Naive thymus-derived CD4-positive, alpha-beta T cell (primary cell): ENCODE measurements at regions of chr14 and their contacts with region 1.

Region 1: DNA sequence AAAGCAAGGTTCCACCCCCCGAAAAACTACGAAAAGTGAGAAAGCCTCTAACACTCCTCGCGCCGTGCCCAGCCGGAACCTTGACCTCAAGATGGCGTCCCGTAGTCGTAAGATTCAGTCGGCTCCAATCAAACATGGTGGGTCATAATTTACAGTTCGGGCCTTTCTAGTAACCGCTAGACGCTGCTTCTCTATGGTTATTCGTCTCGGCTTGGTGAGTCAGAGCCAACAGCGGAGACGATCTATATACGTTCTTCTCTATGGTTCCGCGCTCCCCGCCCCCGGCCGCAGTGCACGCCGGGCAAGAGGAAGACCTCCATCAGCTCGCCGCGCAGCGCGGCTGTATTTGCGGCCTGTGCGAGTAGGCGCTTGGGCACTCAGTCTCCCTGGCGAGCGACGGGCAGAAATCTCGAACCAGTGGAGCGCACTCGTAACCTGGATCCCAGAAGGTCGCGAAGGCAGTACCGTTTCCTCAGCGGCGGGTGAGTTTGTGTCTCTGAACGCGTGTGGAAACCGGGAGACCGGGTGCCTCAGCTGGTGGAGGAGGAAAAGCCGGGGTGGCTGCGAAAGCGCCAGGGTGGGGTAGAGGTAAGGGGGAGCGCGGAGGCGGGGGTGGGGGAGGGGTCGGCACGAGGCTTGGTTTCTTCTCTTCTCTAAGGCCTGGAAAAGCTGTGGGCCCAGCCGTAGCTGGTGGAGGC is at the start of gene RBM25:
- DNase-seq: peak; percentile 85 to 98 (median 96)
- ATAC-seq: peak; percentile 99
- H3K4me3 ChIP-seq: peak within 1 kb of the TSS; percentile 77
- H3K4me3 Mint-ChIP-seq: no peak within 1 kb of the TSS
- H3K27ac ChIP-seq: peak within 1 kb of the TSS; percentile 92
- H3K27ac Mint-ChIP-seq: no peak within 1 kb of the TSS
- H3K4me1 ChIP-seq: peaks cover 30 to 36% of the 10 kb centered on the region in 2 donors
- H3K4me1 Mint-ChIP-seq: peaks cover 19 to 45% (median 30%) of the 10 kb centered on the region in 7 donors
- H3K27me3 ChIP-seq: no peaks in the 10 kb centered on the region
- H3K27me3 Mint-ChIP-seq: no peaks in the 10 kb centered on the region
- total RNA-seq, gene RBM25: 111 to 168 (median 146) TPM

Region 2: DNA sequence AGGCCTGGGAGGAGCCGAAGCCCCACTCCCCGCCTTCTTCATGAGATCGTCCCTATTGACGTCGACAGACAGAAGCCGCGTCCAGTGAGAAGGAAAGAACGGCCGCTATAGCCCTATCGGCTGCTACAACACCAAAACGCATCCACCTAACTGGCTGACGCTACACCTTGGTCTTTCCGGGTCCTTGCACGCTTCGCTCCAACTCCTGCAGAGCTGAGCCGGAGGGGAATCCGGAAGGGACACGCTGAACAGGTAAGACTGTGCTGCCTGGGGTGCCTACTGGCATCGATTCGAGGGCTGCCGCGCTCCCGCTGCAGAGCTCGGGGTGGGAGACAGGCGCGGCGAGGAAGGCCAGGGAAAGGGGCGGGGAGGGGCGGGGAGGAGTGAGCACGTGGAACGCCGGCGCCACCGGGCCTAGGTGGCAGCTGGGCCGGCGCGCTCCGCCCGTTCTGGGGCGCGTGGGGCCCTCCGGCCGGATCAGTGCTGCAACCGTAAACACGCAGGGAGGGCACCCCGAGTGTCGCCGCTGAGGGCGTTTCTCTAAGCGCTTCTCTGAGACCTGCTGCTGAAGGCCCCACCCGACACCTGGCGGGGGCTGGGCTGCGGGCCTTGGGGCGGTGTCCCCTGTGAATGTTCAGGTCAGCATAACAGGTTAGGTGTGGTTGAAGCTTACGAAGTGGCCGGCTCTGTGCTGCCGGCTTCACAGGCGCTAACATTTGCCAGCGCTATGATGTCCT is 131.9 kb before region 1 on chr14 and contains the start of gene DCAF4:
- CTCF ChIA-PET with region 1: no interaction called
- POLR2A ChIA-PET with region 1: interaction called, 3 read pairs
- intact Hi-C with region 1: loop called in 1 of 2 experiments (anchors 1 kb)
- DNase-seq: peak; percentile 67 to 96 (median 92)
- ATAC-seq: peak; percentile 96
- H3K4me3 ChIP-seq: peak within 1 kb of the TSS; percentile 64
- H3K4me3 Mint-ChIP-seq: peak within 1 kb of the TSS; percentile 93 to 99 (median 96)
- H3K27ac ChIP-seq: peak within 1 kb of the TSS; percentile 74
- H3K27ac Mint-ChIP-seq: peak within 1 kb of the TSS; percentile 58 to 96 (median 95)
- H3K4me1 ChIP-seq: peaks cover 0 to 3% of the 10 kb centered on the region in 2 donors
- H3K4me1 Mint-ChIP-seq: peaks cover 2 to 27% (median 11%) of the 10 kb centered on the region in 7 donors
- H3K27me3 ChIP-seq: no peaks in the 10 kb centered on the region
- H3K27me3 Mint-ChIP-seq: peaks cover 0 to 21% (median 0%) of the 10 kb centered on the region in 5 donors
- total RNA-seq, gene DCAF4: 17.6 to 37.8 (median 21.8) TPM

Region 3: DNA sequence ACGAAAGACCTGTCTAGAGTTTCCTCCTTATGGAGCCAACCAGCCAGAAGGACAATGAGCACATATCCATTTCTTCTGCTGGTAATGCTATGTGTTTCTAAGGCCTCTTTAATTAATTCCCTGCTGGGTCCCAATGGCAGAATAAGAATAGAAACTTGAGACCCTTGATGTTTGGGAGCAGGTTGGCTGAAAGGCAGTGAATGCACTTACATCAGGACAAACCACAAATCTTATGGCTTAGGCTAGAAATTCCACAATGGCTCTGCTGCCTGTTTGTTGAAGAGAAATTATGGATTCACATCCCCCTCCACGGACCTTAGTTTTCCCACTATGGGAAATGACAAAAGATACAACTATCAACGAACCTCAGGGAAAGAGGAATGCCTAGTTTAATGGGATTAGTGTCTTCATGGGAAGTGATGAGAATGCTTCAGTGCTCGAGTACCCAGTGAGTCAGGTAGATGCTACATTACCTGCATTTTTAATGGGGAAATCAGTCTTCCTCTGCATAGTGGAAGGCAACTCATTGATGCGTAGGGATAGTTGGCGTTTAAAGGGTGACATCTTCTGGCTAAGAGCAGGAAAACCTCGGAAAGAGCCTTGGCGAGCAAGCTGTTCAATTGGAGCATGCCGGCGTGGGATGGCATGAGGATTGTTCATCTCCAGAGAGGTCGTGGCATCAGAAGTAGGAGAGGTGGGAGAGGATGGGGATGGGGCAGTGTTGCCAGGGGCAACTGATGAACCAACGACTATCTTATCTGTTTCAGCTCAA is 225.4 kb after region 1 on chr14:
- CTCF ChIA-PET with region 1: no interaction called
- POLR2A ChIA-PET with region 1: no interaction called
- intact Hi-C with region 1: no loop called
- DNase-seq: no peak
- ATAC-seq: no peak
- H3K4me3 ChIP-seq: no peak overlapping the region
- H3K4me3 Mint-ChIP-seq: no peak overlapping the region
- H3K27ac ChIP-seq: no peak overlapping the region
- H3K27ac Mint-ChIP-seq: peak overlapping the region in 1 of 9 donors; percentile 46
- H3K4me1 ChIP-seq: no peaks in the 10 kb centered on the region
- H3K4me1 Mint-ChIP-seq: peaks cover 0 to 8% (median 0%) of the 10 kb centered on the region in 7 donors
- H3K27me3 ChIP-seq: no peaks in the 10 kb centered on the region
- H3K27me3 Mint-ChIP-seq: no peaks in the 10 kb centered on the region

Region 4: GRCh38 chr14:73458151-73458976 is 400.0 kb after region 1 on chr14 and contains the start of gene NUMB:
- CTCF ChIA-PET with region 1: no interaction called
- POLR2A ChIA-PET with region 1: interaction called, 7 read pairs
- intact Hi-C with region 1: loop called (anchors 1 kb)
- DNase-seq: peak; percentile 70 to 99 (median 98)
- ATAC-seq: peak; percentile 99
- H3K4me3 ChIP-seq: peak within 1 kb of the TSS; percentile 71
- H3K4me3 Mint-ChIP-seq: peak within 1 kb of the TSS; percentile 87 to 100 (median 98)
- H3K27ac ChIP-seq: peak within 1 kb of the TSS; percentile 82
- H3K27ac Mint-ChIP-seq: peak within 1 kb of the TSS; percentile 80 to 98 (median 94)
- H3K4me1 ChIP-seq: peaks cover 0 to 9% of the 10 kb centered on the region in 2 donors
- H3K4me1 Mint-ChIP-seq: peaks cover 32 to 48% (median 45%) of the 10 kb centered on the region in 7 donors
- H3K27me3 ChIP-seq: no peaks in the 10 kb centered on the region
- H3K27me3 Mint-ChIP-seq: no peaks in the 10 kb centered on the region
- total RNA-seq, gene NUMB: 48.9 to 90.6 (median 49.4) TPM

Region 5: GRCh38 chr14:73713803-73714655 is 655.7 kb after region 1 on chr14 and contains the start of gene PNMA1:
- CTCF ChIA-PET with region 1: no interaction called
- POLR2A ChIA-PET with region 1: no interaction called
- intact Hi-C with region 1: loop called in 1 of 2 experiments (anchors 10 kb)
- DNase-seq: peak; percentile 76 to 90 (median 83)
- ATAC-seq: peak; percentile 91
- H3K4me3 ChIP-seq: peak within 1 kb of the TSS; percentile 92
- H3K4me3 Mint-ChIP-seq: peak within 1 kb of the TSS; percentile 91 to 100 (median 97)
- H3K27ac ChIP-seq: peak within 1 kb of the TSS; percentile 83
- H3K27ac Mint-ChIP-seq: peak within 1 kb of the TSS; percentile 93 to 99 (median 96)
- H3K4me1 ChIP-seq: peaks cover 3 to 4% of the 10 kb centered on the region in 2 donors
- H3K4me1 Mint-ChIP-seq: peaks cover 22 to 40% (median 26%) of the 10 kb centered on the region in 7 donors
- H3K27me3 ChIP-seq: no peaks in the 10 kb centered on the region
- H3K27me3 Mint-ChIP-seq: no peaks in the 10 kb centered on the region
- total RNA-seq, gene PNMA1: 21.6 to 40.4 (median 37.1) TPM

Region 6: DNA sequence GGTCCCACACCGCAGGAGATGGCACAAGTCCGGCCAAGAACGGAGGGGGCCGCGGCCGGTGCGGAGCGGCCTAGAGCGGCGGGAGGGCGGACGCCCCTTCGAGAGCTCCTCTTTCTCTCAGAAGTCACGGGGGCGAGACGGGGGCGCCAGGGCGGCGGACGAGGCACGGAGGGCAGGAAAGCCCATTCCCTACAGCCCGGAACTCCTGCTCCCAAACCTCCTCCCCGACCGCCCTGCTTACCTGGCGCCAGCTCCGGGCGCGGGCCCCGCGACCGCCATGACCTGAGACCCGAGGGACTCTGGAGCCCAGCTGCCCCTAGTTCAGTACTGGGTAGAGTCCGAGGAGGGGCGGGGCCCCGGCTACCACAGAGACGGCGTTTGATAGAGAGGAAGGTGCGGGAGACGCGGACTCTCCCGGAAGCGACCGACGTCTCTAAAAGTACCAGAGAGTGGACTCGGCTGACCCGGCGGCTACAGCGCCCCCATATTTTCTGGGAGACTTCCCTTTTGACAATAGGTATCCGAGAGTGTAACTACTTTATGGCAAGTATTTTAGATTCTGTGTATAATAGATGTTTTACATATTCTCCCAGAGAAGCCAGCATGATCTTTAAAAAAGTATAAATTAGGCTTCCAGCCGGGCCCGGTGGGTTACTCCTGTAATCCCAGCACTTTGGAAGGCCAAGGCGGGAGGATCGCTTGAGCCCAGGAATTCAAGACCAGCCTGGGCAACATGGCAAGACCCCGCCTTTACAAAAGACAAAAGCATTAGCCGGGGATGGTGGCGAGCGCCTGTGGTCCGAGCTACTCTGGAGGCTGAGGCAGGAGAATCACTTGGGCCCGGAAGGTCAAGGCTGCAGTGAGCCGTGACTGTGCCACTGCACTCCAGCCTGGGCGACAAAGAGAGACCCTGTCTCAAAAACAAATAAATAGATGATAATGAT is 1244.5 kb after region 1 on chr14 and contains the start of gene ABCD4:
- CTCF ChIA-PET with region 1: no interaction called
- POLR2A ChIA-PET with region 1: no interaction called
- intact Hi-C with region 1: loop called (anchors 2 kb)
- DNase-seq: peak; percentile 50 to 85 (median 65)
- ATAC-seq: peak; percentile 95
- H3K4me3 ChIP-seq: peak within 1 kb of the TSS; percentile 87
- H3K4me3 Mint-ChIP-seq: peak within 1 kb of the TSS; percentile 90 to 100 (median 96)
- H3K27ac ChIP-seq: peak within 1 kb of the TSS; percentile 77
- H3K27ac Mint-ChIP-seq: peak within 1 kb of the TSS; percentile 81 to 99 (median 96)
- H3K4me1 ChIP-seq: peaks cover 17 to 19% of the 10 kb centered on the region in 2 donors
- H3K4me1 Mint-ChIP-seq: peaks cover 18 to 49% (median 33%) of the 10 kb centered on the region in 7 donors
- H3K27me3 ChIP-seq: no peaks in the 10 kb centered on the region
- H3K27me3 Mint-ChIP-seq: no peaks in the 10 kb centered on the region
- total RNA-seq, gene ABCD4: 57.6 to 109 (median 68.2) TPM